Ascending aorta (tissue), 2 donors: ENCODE measurements at regions of chr1 and their contacts with region 1.

Region 1: DNA sequence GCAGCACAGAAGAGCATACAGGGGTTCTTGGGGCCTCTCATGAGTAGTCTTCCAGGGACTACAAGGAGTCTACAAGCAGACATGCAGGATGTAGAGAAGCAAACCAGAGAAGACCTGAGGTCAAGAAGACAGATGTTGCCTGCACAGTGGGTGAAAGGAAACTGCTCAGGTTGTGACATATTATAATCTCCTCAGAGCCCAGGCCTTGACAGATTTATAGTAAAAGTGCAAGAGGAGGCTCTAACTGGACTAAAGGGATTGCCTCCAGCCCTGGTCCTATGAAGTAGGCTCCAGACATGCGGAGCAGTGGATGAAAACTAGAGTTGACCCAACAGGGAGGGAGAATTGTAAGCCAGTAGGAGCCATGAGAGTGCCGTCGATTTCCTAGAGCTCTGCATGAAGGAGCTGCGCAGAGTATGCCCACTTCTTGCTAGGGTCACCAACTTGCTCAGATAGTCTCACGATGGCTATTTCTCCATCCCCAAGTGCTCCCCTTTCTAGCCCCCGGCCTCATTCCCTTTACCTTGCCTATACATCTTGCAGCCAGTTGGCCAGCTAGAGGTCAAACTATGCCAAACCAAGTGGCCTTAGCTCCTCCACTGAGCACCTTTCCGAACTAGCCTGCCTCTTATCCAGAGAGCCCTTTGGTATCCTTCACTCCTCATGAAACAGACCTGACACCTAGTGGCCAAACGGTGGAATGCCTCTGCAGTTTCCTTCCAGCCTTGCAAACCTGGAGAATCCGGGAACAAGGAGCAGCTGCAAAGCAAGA is 36.2 kb upstream of the IPO9 start:
- DNase-seq: peak in 1 of 2 donors; percentile 91
- H3K4me3 ChIP-seq: no peak overlapping the region
- H3K27ac ChIP-seq: peak overlapping the region; percentile 87 to 88
- H3K4me1 ChIP-seq: peaks cover 23 to 40% of the 10 kb centered on the region in 2 donors
- H3K27me3 ChIP-seq: no peaks in the 10 kb centered on the region
- CTCF ChIP-seq: peak; percentile 93 to 98 (median 95)

Region 2: DNA sequence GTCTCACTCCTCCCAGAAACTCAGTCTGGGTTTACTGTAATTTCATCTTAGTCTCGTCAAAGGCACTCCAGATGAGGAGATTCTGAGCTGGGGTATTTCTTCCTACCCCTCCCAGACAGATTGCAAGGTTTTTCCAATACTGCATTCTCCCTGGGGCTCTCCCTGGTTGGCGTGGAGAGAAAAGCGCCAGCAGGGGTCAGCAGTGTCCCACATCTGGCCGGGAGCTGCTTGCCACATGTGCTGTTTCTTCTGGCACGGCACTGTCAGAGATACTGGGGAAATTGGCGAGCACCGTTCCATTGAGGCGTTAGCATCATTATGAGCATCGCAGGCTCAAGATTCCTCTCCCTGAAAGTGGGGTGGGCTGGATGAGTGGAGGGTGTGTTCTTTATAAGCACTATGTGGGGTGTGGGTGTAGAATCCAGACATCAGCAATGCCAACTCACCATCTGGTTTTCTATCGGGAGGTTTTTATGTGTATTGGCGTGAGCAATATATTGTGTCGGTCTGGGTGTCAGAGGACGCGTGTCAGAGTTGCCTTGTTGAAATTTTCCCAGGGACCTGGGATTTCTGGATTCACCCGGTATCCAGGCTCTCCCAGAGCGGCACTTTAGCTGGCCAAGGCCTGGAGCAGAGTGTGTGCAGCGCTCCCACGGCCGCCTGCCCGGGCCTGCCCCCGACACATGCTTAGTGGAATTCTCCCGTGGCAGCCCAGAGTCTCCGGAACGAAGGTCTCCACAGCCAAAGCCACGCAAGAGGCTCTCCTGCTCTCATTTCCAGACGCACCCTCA is 261.8 kb before region 1 on chr1:
- intact Hi-C with region 1: loop called (anchors 2 kb)
- DNase-seq: peak; percentile 51 to 95
- H3K4me3 ChIP-seq: no peak overlapping the region
- H3K27ac ChIP-seq: peak overlapping the region; percentile 51 to 59
- H3K4me1 ChIP-seq: peaks cover 20 to 45% of the 10 kb centered on the region in 2 donors
- H3K27me3 ChIP-seq: no peaks in the 10 kb centered on the region
- CTCF ChIP-seq: peak; percentile 89 to 96 (median 93)

Region 3: GRCh38 chr1:201709564-201710295 is 83.0 kb before region 1 on chr1:
- intact Hi-C with region 1: loop called (anchors 1 kb)
- DNase-seq: peak in 1 of 2 donors; percentile 86
- H3K4me3 ChIP-seq: no peak overlapping the region
- H3K27ac ChIP-seq: peak overlapping the region; percentile 93 to 97
- H3K4me1 ChIP-seq: peaks cover 33 to 47% of the 10 kb centered on the region in 2 donors
- H3K27me3 ChIP-seq: no peaks in the 10 kb centered on the region
- CTCF ChIP-seq: peak; percentile 91

Region 4: GRCh38 chr1:201750939-201751338 is 41.8 kb before region 1 on chr1:
- intact Hi-C with region 1: loop called (anchors 2 kb)
- DNase-seq: peak in 1 of 2 donors; percentile 78
- H3K4me3 ChIP-seq: no peak overlapping the region
- H3K27ac ChIP-seq: peak overlapping the region; percentile 97 to 98
- H3K4me1 ChIP-seq: peaks cover 37 to 92% of the 10 kb centered on the region in 2 donors
- H3K27me3 ChIP-seq: no peaks in the 10 kb centered on the region
- CTCF ChIP-seq: no peak

Region 5: DNA sequence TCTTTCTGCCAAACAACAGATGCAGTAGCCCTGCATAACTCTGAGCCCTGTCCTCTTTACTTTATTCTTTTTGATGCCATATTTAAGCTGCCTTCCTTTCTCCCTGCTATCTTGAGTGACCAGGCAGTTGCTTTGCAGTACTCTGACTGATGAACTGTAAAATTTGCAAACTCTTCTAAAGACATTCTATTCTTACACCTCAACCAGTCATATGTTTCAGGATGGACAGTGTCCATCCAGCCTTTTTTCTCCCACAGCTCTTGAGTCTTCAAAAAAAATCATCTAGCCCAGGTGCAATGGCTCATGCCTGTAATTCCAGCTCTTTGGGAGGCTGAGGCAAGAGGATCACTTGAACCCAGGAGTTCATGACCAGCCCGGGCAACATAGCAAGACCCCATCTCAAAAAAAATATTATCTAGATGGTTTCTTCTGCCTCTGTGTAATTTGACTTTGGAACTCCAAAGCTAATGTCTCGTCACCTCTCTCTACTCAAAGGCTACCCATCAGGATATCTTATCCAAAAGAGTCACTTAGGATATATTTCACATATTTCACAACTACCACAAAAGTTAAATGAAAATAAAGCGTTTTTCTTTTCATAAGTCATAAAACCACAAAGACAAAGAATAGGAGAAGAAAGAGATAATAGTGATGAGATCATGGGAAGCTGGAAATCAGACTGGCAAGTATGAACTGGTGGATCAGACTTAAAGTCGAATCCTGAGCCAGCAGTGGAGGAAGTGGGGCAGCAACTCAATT is 18.3 kb before region 1 on chr1:
- intact Hi-C with region 1: no loop called
- DNase-seq: no peak
- H3K4me3 ChIP-seq: no peak overlapping the region
- H3K27ac ChIP-seq: peak overlapping the region; percentile 84 to 87
- H3K4me1 ChIP-seq: peaks cover 10 to 59% of the 10 kb centered on the region in 2 donors
- H3K27me3 ChIP-seq: no peaks in the 10 kb centered on the region
- CTCF ChIP-seq: no peak